Naive thymus-derived CD4-positive, alpha-beta T cell (primary cell): ENCODE measurements at regions of chrX and their contacts with region 1.

Region 1: DNA sequence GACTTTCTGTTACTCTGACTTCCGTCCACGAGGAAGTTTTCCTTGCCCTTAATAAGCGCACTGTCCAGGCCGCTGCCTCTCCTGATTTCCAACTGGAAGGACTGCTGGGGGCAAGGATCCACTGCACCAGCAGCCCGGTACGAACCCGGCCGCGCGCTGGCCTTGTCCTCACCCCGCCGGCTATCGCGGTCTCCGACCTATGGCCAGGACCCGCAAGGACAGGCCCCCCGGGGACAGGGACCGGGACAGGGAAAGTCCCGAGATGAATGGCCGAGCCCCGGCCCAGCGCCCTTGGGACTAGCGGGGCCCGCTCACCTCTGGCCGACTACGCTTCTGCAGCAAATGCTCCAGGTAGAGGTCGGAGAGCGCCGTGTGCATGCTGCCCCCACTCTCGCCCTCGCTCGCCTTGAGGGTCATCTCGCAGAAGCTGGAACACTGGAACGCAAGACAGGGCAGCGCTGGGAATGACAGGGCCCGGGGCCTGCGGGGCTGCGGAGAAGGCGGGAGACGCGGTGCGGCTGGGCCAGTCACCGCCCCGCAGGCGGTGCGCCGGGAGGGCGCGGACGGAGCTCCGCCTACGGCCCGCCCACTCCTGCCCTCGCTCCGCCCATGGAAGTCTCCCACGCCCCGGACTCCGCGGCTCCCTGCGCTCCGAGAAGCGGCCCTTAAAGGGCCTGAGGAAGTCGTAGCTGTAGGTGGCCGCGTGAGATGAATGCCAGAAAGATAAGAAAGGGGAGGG is at the start of gene MPP1:
- DNase-seq: peak; percentile 61 to 79 (median 74)
- ATAC-seq: peak; percentile 99
- H3K4me3 ChIP-seq: peak within 1 kb of the TSS; percentile 55
- H3K4me3 Mint-ChIP-seq: peak within 1 kb of the TSS; percentile 80 to 91 (median 84)
- H3K27ac ChIP-seq: peak within 1 kb of the TSS; percentile 74
- H3K27ac Mint-ChIP-seq: peak within 1 kb of the TSS; percentile 53 to 82 (median 73)
- H3K4me1 ChIP-seq: peaks cover 0 to 27% of the 10 kb centered on the region in 2 donors
- H3K4me1 Mint-ChIP-seq: peaks cover 8 to 46% (median 42%) of the 10 kb centered on the region in 7 donors
- H3K27me3 ChIP-seq: no peaks in the 10 kb centered on the region
- H3K27me3 Mint-ChIP-seq: no peaks in the 10 kb centered on the region
- total RNA-seq, gene MPP1: 23.2 to 76.7 (median 31.9) TPM

Region 2: DNA sequence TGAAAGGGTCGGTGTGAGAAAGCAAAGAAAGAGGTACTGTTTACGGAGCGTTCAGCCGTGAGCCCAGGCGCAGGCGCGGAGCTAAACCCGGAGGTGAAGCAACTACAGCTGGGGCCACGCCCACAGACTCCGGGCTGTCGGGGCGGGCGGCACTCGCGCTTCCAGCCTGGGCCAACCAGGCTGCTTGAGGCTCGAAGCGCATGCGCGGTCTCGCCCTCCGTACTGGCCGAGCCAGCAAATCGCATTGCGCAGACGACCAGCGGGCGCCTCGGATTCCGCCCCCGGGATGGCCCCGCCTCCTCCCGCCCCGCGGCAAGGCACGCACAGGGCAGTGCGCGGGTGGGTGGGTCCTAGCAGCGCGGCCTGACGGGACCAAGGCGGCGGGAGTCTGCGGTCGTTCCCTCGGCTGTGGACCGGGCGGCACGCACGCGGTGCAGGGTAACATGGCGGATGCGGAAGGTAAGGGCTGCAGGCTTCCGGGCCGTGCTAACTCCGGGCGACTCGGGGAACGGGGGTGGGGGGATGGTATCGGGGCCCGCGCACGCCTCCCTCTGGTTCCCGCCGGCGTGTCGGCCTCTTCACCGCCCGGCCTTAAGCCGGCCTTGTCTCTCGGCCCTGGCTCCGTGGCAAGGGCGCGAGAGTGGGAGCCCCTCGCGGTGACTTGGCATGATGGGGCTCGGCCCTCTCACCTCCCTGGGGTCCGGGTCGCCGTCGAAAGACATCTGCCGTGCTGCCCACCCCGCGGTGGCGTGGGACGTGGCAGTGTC is 42.4 kb before region 1 on chrX and contains the start of gene DKC1:
- CTCF ChIA-PET with region 1: no interaction called
- POLR2A ChIA-PET with region 1: interaction called, 15 read pairs
- intact Hi-C with region 1: loop called (anchors 1 kb)
- DNase-seq: peak; percentile 85 to 95 (median 93)
- ATAC-seq: peak; percentile 94
- H3K4me3 ChIP-seq: peak within 1 kb of the TSS; percentile 61
- H3K4me3 Mint-ChIP-seq: peak within 1 kb of the TSS; percentile 85 to 92 (median 90)
- H3K27ac ChIP-seq: peak within 1 kb of the TSS; percentile 72
- H3K27ac Mint-ChIP-seq: peak within 1 kb of the TSS; percentile 89 to 97 (median 92)
- H3K4me1 ChIP-seq: peaks cover 9% of the 10 kb centered on the region in 2 donors
- H3K4me1 Mint-ChIP-seq: peaks cover 0 to 24% (median 18%) of the 10 kb centered on the region in 7 donors
- H3K27me3 ChIP-seq: no peaks in the 10 kb centered on the region
- H3K27me3 Mint-ChIP-seq: no peaks in the 10 kb centered on the region
- total RNA-seq, gene DKC1: 50.5 to 75.0 (median 66.5) TPM

Region 3: DNA sequence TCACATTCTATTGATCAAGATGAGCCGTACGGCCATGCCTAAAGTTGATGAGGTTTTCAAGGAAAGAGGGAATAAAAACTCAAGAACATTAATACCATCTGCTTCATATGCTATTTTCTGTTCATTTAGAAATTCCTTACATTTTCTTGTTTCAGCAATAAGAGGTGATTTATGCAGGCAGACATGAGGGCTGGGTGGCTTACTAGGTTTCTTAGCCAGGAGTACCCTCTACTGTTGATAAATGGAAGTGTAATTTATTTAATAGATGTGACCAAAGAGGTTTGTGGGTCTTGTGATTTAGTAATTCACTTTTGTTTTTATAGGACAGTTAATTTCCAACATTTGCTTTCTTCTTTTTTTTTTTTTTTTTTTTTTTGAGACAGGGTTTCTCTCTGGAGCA is 35.7 kb after region 1 on chrX:
- CTCF ChIA-PET with region 1: no interaction called
- POLR2A ChIA-PET with region 1: no interaction called
- intact Hi-C with region 1: loop called in 1 of 2 experiments (anchors 5 kb)
- DNase-seq: peak in 7 of 9 donors; percentile 2 to 50 (median 34)
- ATAC-seq: peak; percentile 69
- H3K4me3 ChIP-seq: no peak overlapping the region
- H3K4me3 Mint-ChIP-seq: no peak overlapping the region
- H3K27ac ChIP-seq: no peak overlapping the region
- H3K27ac Mint-ChIP-seq: no peak overlapping the region
- H3K4me1 ChIP-seq: no peaks in the 10 kb centered on the region
- H3K4me1 Mint-ChIP-seq: peaks cover 0 to 11% (median 0%) of the 10 kb centered on the region in 7 donors
- H3K27me3 ChIP-seq: no peaks in the 10 kb centered on the region
- H3K27me3 Mint-ChIP-seq: peaks cover 0 to 6% (median 0%) of the 10 kb centered on the region in 5 donors

Region 4: GRCh38 chrX:155612312-155613224 is 807.4 kb after region 1 on chrX and contains the start of gene TMLHE:
- CTCF ChIA-PET with region 1: no interaction called
- POLR2A ChIA-PET with region 1: no interaction called
- intact Hi-C with region 1: loop called in 1 of 2 experiments (anchors 10 kb)
- DNase-seq: peak; percentile 28 to 68 (median 48)
- ATAC-seq: peak; percentile 93
- H3K4me3 ChIP-seq: peak within 1 kb of the TSS; percentile 83
- H3K4me3 Mint-ChIP-seq: peak within 1 kb of the TSS; percentile 87 to 95 (median 91)
- H3K27ac ChIP-seq: peak within 1 kb of the TSS; percentile 96
- H3K27ac Mint-ChIP-seq: peak within 1 kb of the TSS; percentile 91 to 97 (median 95)
- H3K4me1 ChIP-seq: no peaks in the 10 kb centered on the region
- H3K4me1 Mint-ChIP-seq: peaks cover 8 to 43% (median 33%) of the 10 kb centered on the region in 7 donors
- H3K27me3 ChIP-seq: no peaks in the 10 kb centered on the region
- H3K27me3 Mint-ChIP-seq: no peaks in the 10 kb centered on the region
- total RNA-seq, gene TMLHE: 11.8 to 17.7 (median 14.6) TPM